ENCODE measurements at regions of chr9 and their contacts with region 1.

Region 1: GRCh38 chr9:125241000-125241862 is at the start of gene HSPA5:
- DNase-seq: peak; percentile 99
- ATAC-seq: peak; percentile 85 to 95 (median 86)
- H3K4me3 ChIP-seq: peak within 1 kb of the TSS; percentile 97
- H3K4me3 Mint-ChIP-seq: peak within 1 kb of the TSS; percentile 97
- H3K27ac ChIP-seq: peak within 1 kb of the TSS; percentile 100
- H3K27ac Mint-ChIP-seq: peak within 1 kb of the TSS; percentile 99 to 100
- H3K4me1 ChIP-seq: peaks cover 35% of the 10 kb centered on the region
- H3K4me1 Mint-ChIP-seq: peaks cover 53 to 55% of the 10 kb centered on the region in 2 donors
- H3K27me3 ChIP-seq: no peaks in the 10 kb centered on the region
- H3K27me3 Mint-ChIP-seq: peaks cover 0 to 2% of the 10 kb centered on the region in 2 donors
- CTCF ChIP-seq: no peak
- total RNA-seq, gene HSPA5: 222 to 281 (median 275) TPM

Region 2: DNA sequence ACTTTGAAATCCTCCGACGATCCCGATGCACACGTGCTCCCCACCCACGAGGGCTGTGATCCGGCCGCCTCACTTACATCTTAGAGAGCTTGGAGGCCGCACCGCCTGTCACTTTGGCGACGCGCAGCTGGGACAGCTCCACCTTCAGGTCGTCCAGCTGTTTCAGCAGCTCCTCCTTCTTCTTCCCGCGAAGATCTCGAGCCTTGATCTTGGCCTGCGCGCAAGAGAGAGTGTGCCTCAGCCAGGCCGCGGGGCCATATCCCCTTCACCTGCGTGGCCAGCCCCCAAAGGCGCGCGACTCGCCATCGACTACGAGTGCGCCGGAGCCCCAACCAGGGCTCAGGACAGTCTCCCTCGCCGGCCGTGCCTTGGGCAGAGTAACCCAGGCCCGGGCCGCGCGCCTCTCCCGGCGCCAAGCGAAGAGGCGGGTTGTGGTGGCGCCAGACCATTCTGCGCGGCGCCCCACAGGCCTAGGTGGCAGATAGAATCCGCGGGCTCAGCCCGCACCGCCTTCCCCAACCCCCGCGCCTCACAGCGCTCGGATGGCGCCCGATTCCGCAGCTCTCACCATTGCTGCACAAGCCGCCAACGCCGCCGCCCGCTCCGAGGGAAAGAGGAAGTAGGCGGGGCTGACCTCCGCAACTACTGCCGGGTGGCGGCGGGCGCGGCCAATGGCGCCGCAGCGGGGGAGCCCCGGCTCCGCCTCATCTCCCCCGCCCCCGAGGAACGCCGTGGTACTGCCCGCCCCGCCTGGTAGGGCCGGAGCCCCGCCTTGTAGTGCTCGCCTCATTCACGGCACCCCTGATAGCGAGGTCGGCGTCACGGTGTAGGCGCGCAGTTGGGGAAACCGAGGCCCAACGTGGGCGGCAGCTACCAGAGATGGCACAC is 379.6 kb before region 1 on chr9 and contains the starts of genes ARPC5L and RPL35:
- intact Hi-C with region 1: loop called (anchors 10 kb)
- DNase-seq: peak; percentile 94 to 97
- ATAC-seq: peak; percentile 96 to 99 (median 96)
- H3K4me3 ChIP-seq: peak within 1 kb of the TSS; percentile 72
- H3K4me3 Mint-ChIP-seq: peak within 1 kb of the TSS; percentile 94
- H3K27ac ChIP-seq: peak within 1 kb of the TSS; percentile 87
- H3K27ac Mint-ChIP-seq: peak within 1 kb of the TSS; percentile 92 to 93
- H3K4me1 ChIP-seq: peaks cover 29% of the 10 kb centered on the region
- H3K4me1 Mint-ChIP-seq: peaks cover 27 to 41% of the 10 kb centered on the region in 2 donors
- H3K27me3 ChIP-seq: no peaks in the 10 kb centered on the region
- H3K27me3 Mint-ChIP-seq: no peaks in the 10 kb centered on the region
- CTCF ChIP-seq: peak; percentile 22
- total RNA-seq, gene ARPC5L: 131 to 169 (median 139) TPM
- total RNA-seq, gene RPL35: 716 to 896 (median 795) TPM

Region 3: DNA sequence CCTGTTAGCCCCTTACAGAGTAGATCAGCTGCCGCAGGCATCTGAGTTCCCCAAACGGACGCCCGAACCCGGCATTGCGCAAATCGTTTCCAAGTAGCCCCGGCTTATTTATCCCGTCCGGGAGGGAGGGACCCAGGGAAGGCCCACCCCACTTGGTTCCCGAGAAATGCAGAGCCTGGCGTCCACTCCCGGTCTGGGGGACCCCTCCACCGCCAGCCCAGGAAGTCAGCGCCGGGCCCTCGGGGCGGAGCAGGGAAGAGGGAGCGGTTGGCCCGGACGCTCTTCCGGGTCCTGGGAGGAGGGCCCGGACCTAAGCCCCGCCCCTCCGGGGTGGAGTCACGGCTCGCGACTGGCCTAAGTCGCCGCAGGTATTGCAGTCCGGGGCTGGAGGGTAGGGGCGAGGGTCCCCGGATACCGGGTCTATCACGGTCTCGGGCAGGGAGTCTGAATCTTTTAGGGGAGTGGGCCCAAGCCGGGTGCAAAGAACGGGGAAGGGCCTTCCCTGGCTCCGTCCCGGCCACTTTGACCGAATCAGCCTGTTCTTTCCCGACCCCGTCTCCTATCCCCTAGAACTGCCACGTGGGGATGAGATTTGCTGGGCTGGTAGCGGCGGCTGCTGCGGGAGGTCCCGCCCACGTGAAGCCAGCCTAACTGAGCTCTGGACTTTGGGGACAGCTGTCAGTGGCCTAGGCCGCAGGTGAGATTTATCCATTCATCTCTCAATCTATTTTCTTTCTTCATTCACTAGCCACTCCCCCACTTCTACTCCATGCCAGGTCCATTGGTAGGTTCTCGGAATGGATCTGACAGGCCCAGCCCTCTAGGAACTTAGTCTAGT is 40.8 kb before region 1 on chr9 and contains the start of gene RABEPK:
- intact Hi-C with region 1: loop called (anchors 1 kb)
- DNase-seq: peak; percentile 93 to 94
- ATAC-seq: peak; percentile 98 to 99 (median 98)
- H3K4me3 ChIP-seq: peak within 1 kb of the TSS; percentile 92
- H3K4me3 Mint-ChIP-seq: peak within 1 kb of the TSS; percentile 88
- H3K27ac ChIP-seq: peak within 1 kb of the TSS; percentile 83
- H3K27ac Mint-ChIP-seq: peak within 1 kb of the TSS; percentile 78 to 84
- H3K4me1 ChIP-seq: peaks cover 16% of the 10 kb centered on the region
- H3K4me1 Mint-ChIP-seq: peaks cover 8 to 12% of the 10 kb centered on the region in 2 donors
- H3K27me3 ChIP-seq: no peaks in the 10 kb centered on the region
- H3K27me3 Mint-ChIP-seq: peaks cover 0 to 2% of the 10 kb centered on the region in 2 donors
- CTCF ChIP-seq: no peak
- total RNA-seq, gene RABEPK: 10.6 to 13.1 (median 11.8) TPM

Region 4: GRCh38 chr9:125261501-125262293 is 20.5 kb after region 1 on chr9 and contains the start of gene GAPVD1:
- intact Hi-C with region 1: loop called (anchors 1 kb)
- DNase-seq: peak; percentile 89 to 94
- ATAC-seq: peak; percentile 96 to 99 (median 98)
- H3K4me3 ChIP-seq: peak within 1 kb of the TSS; percentile 91
- H3K4me3 Mint-ChIP-seq: peak within 1 kb of the TSS; percentile 100
- H3K27ac ChIP-seq: peak within 1 kb of the TSS; percentile 95
- H3K27ac Mint-ChIP-seq: peak within 1 kb of the TSS; percentile 90 to 97
- H3K4me1 ChIP-seq: peaks cover 14% of the 10 kb centered on the region
- H3K4me1 Mint-ChIP-seq: peaks cover 35 to 46% of the 10 kb centered on the region in 2 donors
- H3K27me3 ChIP-seq: no peaks in the 10 kb centered on the region
- H3K27me3 Mint-ChIP-seq: no peaks in the 10 kb centered on the region
- CTCF ChIP-seq: peak; percentile 23
- total RNA-seq, gene GAPVD1: 66.1 to 83.2 (median 68.8) TPM

Region 5: DNA sequence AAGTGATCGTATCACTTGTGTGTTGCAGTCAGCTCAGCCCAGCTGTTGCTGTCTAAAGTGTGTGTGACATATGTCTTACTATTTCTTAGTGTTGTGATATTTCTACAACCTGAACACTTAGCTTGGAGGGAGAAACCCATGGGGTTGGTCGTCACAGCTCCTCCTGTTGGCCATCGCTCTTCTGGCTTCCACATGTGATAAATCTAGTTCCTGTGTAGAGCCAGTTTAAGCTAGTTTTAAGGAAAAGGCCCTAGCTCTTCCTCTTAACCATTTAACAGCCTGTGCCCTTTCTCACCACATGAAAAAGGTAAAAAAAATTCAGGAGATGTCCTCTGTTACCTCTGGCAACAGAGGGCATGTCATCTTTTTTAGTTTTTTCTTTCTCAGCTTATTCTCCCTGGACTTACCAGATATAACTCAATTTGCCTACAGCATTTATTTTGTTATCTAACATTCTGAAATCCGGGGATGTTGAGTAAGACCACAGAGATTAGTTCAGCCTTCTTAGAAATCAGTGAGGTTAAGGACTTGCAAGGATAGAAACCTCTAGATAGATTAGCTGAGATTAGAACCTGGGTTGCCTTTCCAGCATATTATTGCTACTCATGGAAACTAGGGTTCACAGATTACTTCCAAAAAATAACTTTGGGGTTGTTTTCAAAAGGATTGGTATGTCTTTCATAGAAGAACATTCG is 120.8 kb after region 1 on chr9:
- intact Hi-C with region 1: no loop called
- DNase-seq: peak in 1 of 2 donors; percentile 39
- ATAC-seq: peak in 2 of 3 donors; percentile 40 to 62
- H3K4me3 ChIP-seq: no peak overlapping the region
- H3K4me3 Mint-ChIP-seq: no peak overlapping the region
- H3K27ac ChIP-seq: no peak overlapping the region
- H3K27ac Mint-ChIP-seq: peak overlapping the region; percentile 27 to 45
- H3K4me1 ChIP-seq: no peaks in the 10 kb centered on the region
- H3K4me1 Mint-ChIP-seq: no peaks in the 10 kb centered on the region
- H3K27me3 ChIP-seq: no peaks in the 10 kb centered on the region
- H3K27me3 Mint-ChIP-seq: no peaks in the 10 kb centered on the region
- CTCF ChIP-seq: no peak